Posterior vena cava (tissue), 2 donors: ENCODE measurements at regions of chr5 and their contacts with region 1.

Region 1: GRCh38 chr5:108560581-108560980 is 178.7 kb upstream of the FBXL17 start:
- DNase-seq: no peak

Region 2: DNA sequence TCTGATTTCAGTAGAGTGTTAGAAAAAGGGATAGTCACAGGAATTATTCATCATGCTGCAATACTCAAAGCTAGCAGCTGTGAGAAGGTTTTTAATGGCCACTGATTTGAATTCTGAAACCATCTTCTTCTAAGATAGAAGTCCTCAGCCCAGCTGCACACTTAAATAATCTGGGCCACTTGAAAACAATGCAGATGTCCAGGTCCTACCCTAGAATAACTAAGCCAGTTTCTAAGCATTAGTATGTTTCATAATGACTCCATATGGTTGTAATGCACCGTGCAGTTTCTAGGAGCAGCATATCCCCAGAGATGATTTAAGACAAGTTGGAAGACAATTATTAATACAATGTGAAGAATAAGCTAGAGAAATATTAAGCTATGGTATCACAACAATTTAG is 18.7 kb before region 1 on chr5:
- intact Hi-C with region 1: loop called in 1 of 2 experiments (anchors 1 kb)
- DNase-seq: no peak

Region 3: DNA sequence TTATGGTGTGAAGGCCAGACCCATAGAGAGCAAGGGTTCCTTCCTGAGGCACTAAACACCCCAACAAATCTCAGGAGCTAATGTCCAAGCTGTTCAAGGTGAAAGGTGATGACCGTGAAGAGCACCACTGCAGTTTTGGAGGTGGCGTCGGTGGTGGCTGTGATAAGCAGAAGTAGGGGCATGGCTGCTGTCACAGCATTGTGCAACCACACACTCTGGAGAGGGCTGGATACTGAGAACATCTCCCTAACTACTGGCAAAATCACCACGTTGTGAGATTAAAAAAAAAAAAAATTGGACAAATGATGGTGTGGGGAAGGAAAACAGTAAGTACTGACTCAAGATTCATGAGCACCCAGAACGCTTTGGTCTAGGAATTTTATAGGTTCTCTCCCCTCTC is 692.7 kb after region 1 on chr5:
- intact Hi-C with region 1: loop called in 1 of 2 experiments (anchors 5 kb)
- DNase-seq: no peak